HepG2 (cell line): ENCODE measurements at regions of chr5 and their contacts with region 1.

Region 1: DNA sequence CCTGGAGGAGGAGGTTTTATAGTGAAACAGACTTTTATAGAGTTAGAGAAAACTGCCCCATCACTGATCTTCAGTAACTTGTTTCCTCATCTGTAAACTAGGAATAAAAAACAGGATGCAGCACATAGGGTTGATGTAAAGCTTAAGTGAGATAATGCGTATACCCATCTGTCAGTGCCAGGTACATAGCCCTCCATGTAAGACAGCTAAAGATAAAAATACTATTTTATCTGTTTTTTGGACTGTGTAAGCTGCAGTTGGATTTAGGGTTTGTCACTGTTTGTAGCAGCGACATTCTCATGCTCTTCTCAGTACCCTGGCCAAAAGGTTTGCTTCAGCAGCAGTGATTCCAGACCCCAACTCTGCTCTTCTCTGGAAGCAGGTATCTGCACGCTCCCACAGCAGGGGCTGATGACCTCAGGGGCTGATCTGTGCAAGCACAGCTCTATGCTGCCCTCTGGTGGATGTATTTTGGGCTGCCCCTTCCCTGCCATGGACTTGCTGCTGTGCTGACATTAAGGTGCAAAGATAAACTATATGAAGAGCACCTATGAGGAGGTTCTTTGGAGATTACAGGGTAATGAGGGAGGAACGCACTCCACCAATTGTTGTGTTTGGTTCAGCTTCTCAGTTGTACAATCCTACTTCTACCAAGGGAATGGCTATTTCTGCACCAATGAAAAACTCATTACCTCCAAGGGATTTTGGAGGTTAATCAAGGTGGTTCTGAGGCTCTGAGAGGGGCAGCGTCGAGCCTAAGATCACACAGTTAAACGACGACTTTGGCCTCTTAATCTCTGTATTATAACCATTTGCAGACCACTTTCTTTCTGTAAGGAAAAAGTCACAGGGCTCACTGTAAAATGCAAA is 13.1 kb downstream of the HMHB1 start:
- DNase-seq: peak; percentile 68
- ATAC-seq: peak; percentile 100
- H3K4me3 ChIP-seq: no peak overlapping the region
- H3K27ac ChIP-seq: no peak overlapping the region
- H3K4me1 ChIP-seq: peaks cover 14% of the 10 kb centered on the region; the same call in 1 of the 2 replicates
- H3K27me3 ChIP-seq: no peaks in the 10 kb centered on the region; a peak in 1 of 5 replicates
- CTCF ChIP-seq: peak; percentile 97
- EP300 ChIP-seq: no peak
- POLR2A ChIP-seq: no peak
- RAD21 ChIP-seq: peak; percentile 97

Region 2: GRCh38 chr5:143014017-143014651 is 811.0 kb before region 1 on chr5:
- CTCF ChIA-PET with region 1: no interaction called
- POLR2A ChIA-PET with region 1: no interaction called
- in situ Hi-C with region 1: no loop called
- intact Hi-C with region 1: loop called (anchors 5 kb)
- DNase-seq: no peak
- ATAC-seq: no peak
- H3K4me3 ChIP-seq: no peak overlapping the region
- H3K27ac ChIP-seq: no peak overlapping the region
- H3K4me1 ChIP-seq: peaks cover 31% of the 10 kb centered on the region
- H3K27me3 ChIP-seq: no peaks in the 10 kb centered on the region
- CTCF ChIP-seq: peak; percentile 57
- EP300 ChIP-seq: no peak
- POLR2A ChIP-seq: no peak
- RAD21 ChIP-seq: no peak

Region 3: GRCh38 chr5:143106174-143106573 is 718.9 kb before region 1 on chr5:
- CTCF ChIA-PET with region 1: no interaction called
- POLR2A ChIA-PET with region 1: no interaction called
- in situ Hi-C with region 1: loop called (anchors 5 kb)
- intact Hi-C with region 1: loop called (anchors 1 kb)
- DNase-seq: peak; percentile 80
- ATAC-seq: peak; percentile 94
- H3K4me3 ChIP-seq: no peak overlapping the region
- H3K27ac ChIP-seq: no peak overlapping the region
- H3K4me1 ChIP-seq: peaks cover 43% of the 10 kb centered on the region
- H3K27me3 ChIP-seq: no peaks in the 10 kb centered on the region
- CTCF ChIP-seq: peak; percentile 77
- EP300 ChIP-seq: no peak
- POLR2A ChIP-seq: no peak
- RAD21 ChIP-seq: peak; percentile 62

Region 4: GRCh38 chr5:143413958-143414669 is 411.0 kb before region 1 on chr5:
- CTCF ChIA-PET with region 1: no interaction called
- POLR2A ChIA-PET with region 1: no interaction called
- in situ Hi-C with region 1: no loop called
- intact Hi-C with region 1: no loop called
- DNase-seq: no peak
- ATAC-seq: no peak
- H3K4me3 ChIP-seq: no peak overlapping the region
- H3K27ac ChIP-seq: no peak overlapping the region
- H3K4me1 ChIP-seq: peaks cover 31% of the 10 kb centered on the region
- H3K27me3 ChIP-seq: no peaks in the 10 kb centered on the region
- CTCF ChIP-seq: no peak
- EP300 ChIP-seq: no peak
- POLR2A ChIP-seq: no peak
- RAD21 ChIP-seq: no peak

Region 5: DNA sequence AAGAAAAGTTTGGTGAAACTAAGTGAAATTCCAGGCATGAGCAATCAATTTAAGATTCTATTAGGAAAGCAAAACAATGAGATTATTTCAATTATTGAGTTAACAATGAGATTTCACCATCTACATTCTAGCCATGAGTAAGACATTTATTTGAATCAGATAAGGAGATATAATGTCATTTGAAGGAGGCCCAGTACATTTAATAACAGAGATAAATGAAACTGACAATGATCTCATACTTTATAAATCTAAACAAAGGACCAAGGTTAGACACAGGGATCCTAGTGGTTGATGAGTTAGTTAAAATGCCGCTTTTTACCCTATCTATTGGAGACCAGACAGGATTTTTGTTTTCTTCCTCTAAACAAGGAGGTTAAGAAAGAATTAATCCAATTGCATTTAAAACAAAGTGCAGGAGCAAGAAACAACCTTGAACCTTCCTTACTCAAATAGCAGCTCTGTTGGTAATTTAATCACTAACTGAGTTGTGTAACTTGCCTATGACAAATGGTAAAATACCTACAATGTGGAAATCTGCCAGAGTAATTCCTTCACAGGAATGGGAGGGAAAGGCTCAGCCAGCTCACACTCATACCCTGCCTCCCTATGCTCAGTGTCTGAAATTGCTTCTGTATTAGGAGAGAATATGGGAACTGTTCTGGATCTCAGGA is 318.1 kb before region 1 on chr5:
- CTCF ChIA-PET with region 1: no interaction called
- POLR2A ChIA-PET with region 1: no interaction called
- in situ Hi-C with region 1: no loop called
- intact Hi-C with region 1: loop called (anchors 5 kb)
- DNase-seq: peak; percentile 99
- ATAC-seq: peak; percentile 98
- H3K4me3 ChIP-seq: peak overlapping the region in 2 of 3 experiments; percentile 0 to 49; a peak in 1 of 6 replicates
- H3K27ac ChIP-seq: peak overlapping the region; percentile 99
- H3K4me1 ChIP-seq: peaks cover 49% of the 10 kb centered on the region
- H3K27me3 ChIP-seq: no peaks in the 10 kb centered on the region
- CTCF ChIP-seq: peak; percentile 58
- EP300 ChIP-seq: peak; percentile 76 to 99
- POLR2A ChIP-seq: peak in 1 of 2 experiments; percentile 46; a peak in 1 of 4 replicates
- RAD21 ChIP-seq: peak; percentile 41; the same call in 1 of the 2 replicates

Region 6: DNA sequence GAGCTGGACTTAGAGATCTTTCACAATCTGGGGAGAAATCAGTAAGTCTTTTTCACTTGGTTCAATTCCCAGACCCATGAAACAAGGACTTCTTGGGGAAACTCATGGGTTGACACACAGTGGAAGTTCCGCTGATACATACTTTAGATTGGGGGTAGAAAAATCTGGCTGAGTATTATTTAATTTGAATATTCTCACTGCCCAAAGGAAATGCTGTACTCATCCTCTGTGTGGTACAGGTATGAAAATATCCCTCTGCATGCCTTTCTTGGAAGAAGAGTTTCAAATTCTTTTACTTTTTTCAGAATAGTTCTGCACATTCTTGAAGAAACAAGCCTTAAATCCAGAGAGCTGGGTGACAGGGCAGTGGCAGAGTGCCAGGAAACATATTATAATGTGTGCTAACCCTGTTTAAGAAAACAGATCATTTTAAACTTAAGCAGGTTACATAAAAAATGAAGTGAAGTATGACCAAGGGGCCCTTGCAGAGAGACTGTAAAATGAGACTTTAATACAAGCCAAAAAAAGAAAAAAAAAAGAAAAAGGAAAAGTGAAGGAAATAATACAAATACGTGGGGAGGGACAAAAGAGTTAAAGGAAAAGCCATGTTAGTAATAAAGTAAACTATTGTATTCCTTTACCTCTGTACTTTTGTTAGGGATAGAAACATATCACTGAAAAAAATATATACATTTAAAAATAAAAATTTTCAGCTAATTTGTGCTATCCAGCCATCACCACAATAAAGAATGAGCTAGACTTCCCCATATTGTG is 248.2 kb before region 1 on chr5:
- CTCF ChIA-PET with region 1: no interaction called
- POLR2A ChIA-PET with region 1: no interaction called
- in situ Hi-C with region 1: no loop called
- intact Hi-C with region 1: no loop called
- DNase-seq: no peak
- ATAC-seq: no peak
- H3K4me3 ChIP-seq: no peak overlapping the region
- H3K27ac ChIP-seq: no peak overlapping the region
- H3K4me1 ChIP-seq: peaks cover 7% of the 10 kb centered on the region
- H3K27me3 ChIP-seq: no peaks in the 10 kb centered on the region
- CTCF ChIP-seq: no peak
- EP300 ChIP-seq: no peak
- POLR2A ChIP-seq: no peak
- RAD21 ChIP-seq: no peak

Region 7: GRCh38 chr5:143648696-143649095 is 176.4 kb before region 1 on chr5:
- CTCF ChIA-PET with region 1: no interaction called
- POLR2A ChIA-PET with region 1: no interaction called
- in situ Hi-C with region 1: no loop called
- intact Hi-C with region 1: loop called (anchors 1 kb)
- DNase-seq: no peak
- ATAC-seq: peak; percentile 46; the same call in 1 of the 3 replicates
- H3K4me3 ChIP-seq: no peak overlapping the region
- H3K27ac ChIP-seq: no peak overlapping the region
- H3K4me1 ChIP-seq: peaks cover 20% of the 10 kb centered on the region
- H3K27me3 ChIP-seq: peaks cover 0 to 8% of the 10 kb centered on the region in 2 experiments; a peak in 3 of 5 replicates
- CTCF ChIP-seq: peak; percentile 49
- EP300 ChIP-seq: no peak
- POLR2A ChIP-seq: no peak
- RAD21 ChIP-seq: no peak

Region 8: DNA sequence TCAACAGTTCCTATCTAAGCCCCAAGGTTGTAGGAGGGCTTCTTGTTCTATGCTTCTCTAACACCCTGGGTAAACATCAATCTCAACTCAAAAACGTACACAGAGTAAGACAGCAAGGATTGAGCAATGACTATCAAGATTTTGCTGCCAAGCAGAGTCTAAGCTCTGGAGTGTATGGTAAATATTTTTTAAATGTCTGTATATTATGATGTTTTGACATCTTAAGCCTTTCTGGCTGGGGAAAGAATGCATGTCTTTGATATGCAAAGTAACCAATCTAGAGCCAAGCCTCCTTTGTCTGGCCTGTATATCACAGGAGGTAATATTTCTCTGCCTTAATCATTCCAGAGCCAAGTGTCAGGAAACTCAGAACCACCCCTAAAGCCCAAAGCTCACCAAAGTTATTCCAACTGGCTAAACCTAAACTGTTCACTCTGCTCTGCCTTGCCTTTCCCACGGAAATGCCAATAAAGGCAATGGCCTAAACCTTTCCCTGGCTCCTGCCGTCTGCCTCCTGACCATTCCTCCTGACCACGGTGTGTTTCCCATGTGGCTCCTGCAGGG is 300.2 kb after region 1 on chr5:
- CTCF ChIA-PET with region 1: no interaction called
- POLR2A ChIA-PET with region 1: no interaction called
- in situ Hi-C with region 1: no loop called
- intact Hi-C with region 1: no loop called
- DNase-seq: no peak
- ATAC-seq: no peak
- H3K4me3 ChIP-seq: no peak overlapping the region
- H3K27ac ChIP-seq: no peak overlapping the region
- H3K4me1 ChIP-seq: no peaks in the 10 kb centered on the region
- H3K27me3 ChIP-seq: no peaks in the 10 kb centered on the region
- CTCF ChIP-seq: no peak
- EP300 ChIP-seq: no peak
- POLR2A ChIP-seq: no peak
- RAD21 ChIP-seq: no peak